Naive thymus-derived CD4-positive, alpha-beta T cell (primary cell): ENCODE measurements at regions of chr11 and their contacts with region 1.

Region 1: DNA sequence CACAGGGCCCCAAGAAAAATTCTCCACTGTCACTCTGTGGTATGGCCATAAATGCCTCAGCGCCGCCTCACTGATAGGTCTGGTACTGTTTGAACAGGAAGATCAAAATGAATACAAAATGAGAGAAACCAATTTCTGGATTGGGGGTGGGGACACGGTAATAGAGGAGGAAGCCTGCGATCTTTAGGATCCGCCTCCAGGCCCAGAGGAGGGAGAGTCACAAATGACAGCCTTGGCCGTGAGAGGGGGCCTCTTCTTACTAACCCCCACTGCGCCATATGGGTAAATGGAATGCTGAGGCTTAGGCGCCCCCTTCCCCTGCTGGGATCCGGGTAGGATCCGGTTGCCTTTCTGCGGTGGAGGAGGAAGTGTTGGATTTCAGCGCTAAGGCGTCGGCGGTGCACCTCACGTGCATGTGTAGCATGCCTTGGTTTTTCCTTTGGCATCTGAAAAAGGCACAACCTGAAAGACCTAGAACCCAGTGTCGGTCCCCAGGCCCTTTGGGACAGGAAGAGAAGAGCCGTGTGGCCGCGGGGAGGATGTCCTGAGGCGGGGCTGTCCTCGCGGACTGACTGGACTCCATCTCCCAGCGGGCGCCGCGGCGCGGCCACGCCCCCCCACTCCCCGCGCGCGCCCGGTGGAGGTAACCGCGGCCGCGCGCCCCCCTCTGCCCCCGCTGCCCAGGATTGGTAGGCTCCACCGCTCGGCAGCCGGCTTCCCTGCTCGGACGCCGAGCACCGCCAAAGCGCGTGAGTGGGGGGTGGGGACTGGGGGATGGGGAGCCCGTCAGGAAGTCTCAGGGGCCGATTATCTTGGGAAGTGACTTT is 718 bp upstream of the MADD start:
- DNase-seq: peak; percentile 82 to 89 (median 87)
- ATAC-seq: peak; percentile 82
- H3K4me3 ChIP-seq: peak overlapping the region; percentile 65
- H3K4me3 Mint-ChIP-seq: peak overlapping the region; percentile 78 to 97 (median 87)
- H3K27ac ChIP-seq: peak overlapping the region; percentile 95
- H3K27ac Mint-ChIP-seq: peak overlapping the region; percentile 93 to 99 (median 96)
- H3K4me1 ChIP-seq: peaks cover 27 to 43% of the 10 kb centered on the region in 2 donors
- H3K4me1 Mint-ChIP-seq: peaks cover 38 to 62% (median 59%) of the 10 kb centered on the region in 7 donors
- H3K27me3 ChIP-seq: no peaks in the 10 kb centered on the region
- H3K27me3 Mint-ChIP-seq: no peaks in the 10 kb centered on the region

Region 2: GRCh38 chr11:45917623-45918330 is 1351.4 kb before region 1 on chr11 and contains the start of gene PEX16:
- CTCF ChIA-PET with region 1: no interaction called
- POLR2A ChIA-PET with region 1: no interaction called
- intact Hi-C with region 1: loop called in 1 of 2 experiments (anchors 1 kb)
- DNase-seq: peak; percentile 86 to 98 (median 97)
- ATAC-seq: peak; percentile 95
- H3K4me3 ChIP-seq: peak within 1 kb of the TSS; percentile 72
- H3K4me3 Mint-ChIP-seq: peak within 1 kb of the TSS; percentile 86 to 98 (median 96)
- H3K27ac ChIP-seq: peak within 1 kb of the TSS; percentile 87
- H3K27ac Mint-ChIP-seq: peak within 1 kb of the TSS; percentile 91 to 100 (median 98)
- H3K4me1 ChIP-seq: peaks cover 24 to 36% of the 10 kb centered on the region in 2 donors
- H3K4me1 Mint-ChIP-seq: peaks cover 31 to 66% (median 49%) of the 10 kb centered on the region in 7 donors
- H3K27me3 ChIP-seq: no peaks in the 10 kb centered on the region
- H3K27me3 Mint-ChIP-seq: peaks cover 0 to 13% (median 4%) of the 10 kb centered on the region in 5 donors
- total RNA-seq, gene PEX16: 48.2 to 64.3 (median 58.1) TPM

Region 3: DNA sequence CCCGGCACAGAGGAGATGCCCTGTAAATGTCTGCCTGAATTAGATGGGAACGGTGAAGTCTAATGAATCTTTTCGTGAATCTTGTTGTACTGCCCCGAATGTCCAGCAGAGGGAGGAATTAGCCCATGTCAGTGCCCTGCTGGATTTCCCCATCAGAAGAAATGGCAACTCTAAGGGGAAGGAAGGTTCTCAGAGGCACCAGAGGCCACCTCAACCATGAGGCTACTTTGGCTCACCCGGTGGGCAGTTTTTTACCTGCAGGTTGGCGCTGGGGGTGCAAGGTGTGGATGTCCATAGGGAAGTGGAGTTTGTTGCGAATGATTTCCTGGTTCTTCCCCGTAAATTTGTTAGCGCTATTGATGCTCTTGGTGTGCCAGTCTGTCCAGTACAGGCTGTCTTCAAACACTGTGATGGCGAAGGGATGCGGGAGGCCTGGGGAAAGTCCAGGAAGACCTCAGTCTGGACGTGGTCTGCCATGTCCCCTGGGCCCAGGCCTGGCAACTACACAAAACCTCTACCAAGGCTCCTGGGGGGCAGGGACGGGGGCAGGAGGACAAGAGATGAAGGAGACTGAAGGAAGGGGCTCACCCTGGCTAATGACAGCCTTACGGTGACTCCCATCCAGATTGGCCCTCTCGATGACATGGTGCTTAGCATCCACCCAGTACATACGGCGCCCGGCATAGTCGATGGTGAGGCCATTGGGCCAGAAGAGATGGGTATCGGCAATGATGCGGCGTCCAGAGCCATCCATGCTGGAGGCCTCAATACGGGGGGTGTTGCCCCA is 379.3 kb before region 1 on chr11:
- CTCF ChIA-PET with region 1: no interaction called
- POLR2A ChIA-PET with region 1: interaction called, 3 read pairs
- intact Hi-C with region 1: loop called in 1 of 2 experiments (anchors 2 kb)
- DNase-seq: peak; percentile 40 to 80 (median 72)
- ATAC-seq: peak; percentile 95
- H3K4me3 ChIP-seq: no peak overlapping the region
- H3K4me3 Mint-ChIP-seq: no peak overlapping the region
- H3K27ac ChIP-seq: no peak overlapping the region
- H3K27ac Mint-ChIP-seq: no peak overlapping the region
- H3K4me1 ChIP-seq: no peaks in the 10 kb centered on the region
- H3K4me1 Mint-ChIP-seq: peaks cover 0 to 6% (median 0%) of the 10 kb centered on the region in 7 donors
- H3K27me3 ChIP-seq: no peaks in the 10 kb centered on the region
- H3K27me3 Mint-ChIP-seq: peaks cover 0 to 7% (median 0%) of the 10 kb centered on the region in 5 donors

Region 4: DNA sequence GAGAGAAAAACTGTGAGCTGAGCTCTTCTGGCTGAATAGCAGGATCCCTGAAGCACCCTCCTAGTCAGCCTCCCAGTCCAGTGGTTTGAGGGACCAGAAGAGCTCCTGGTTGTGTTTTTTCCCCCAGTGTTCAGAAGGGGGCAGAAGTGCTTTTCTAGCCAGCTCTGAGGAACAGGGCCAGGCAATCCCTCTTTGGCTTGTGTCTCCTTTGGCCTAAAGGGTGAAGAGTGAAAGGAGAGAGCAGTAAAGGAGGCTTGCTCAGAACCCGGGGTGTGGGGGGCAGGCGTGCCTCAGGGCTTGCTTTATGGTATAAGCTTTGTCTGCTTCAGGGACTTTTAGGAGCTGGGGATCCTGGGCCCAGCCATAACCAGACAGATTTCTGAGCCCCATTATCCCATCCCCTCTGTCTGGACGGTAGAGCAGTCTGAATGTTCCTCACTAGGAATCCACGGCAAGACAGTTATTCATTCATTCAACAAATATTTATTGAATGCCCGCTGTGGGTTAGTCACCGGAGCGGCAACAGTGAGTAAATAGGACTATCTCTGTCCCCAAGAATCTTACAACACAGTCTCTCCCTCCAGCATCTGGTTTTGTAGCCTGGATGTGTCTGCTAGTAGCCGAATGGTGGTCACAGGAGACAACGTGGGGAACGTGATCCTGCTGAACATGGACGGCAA is 35.1 kb before region 1 on chr11:
- CTCF ChIA-PET with region 1: interaction called, 6 read pairs
- POLR2A ChIA-PET with region 1: interaction called, 14 read pairs
- intact Hi-C with region 1: loop called in 1 of 2 experiments (anchors 1 kb)
- DNase-seq: peak in 6 of 9 donors; percentile 17 to 46 (median 32)
- ATAC-seq: peak; percentile 8
- H3K4me3 ChIP-seq: peak overlapping the region; percentile 38
- H3K4me3 Mint-ChIP-seq: peak overlapping the region; percentile 35 to 90 (median 80)
- H3K27ac ChIP-seq: peak overlapping the region; percentile 81
- H3K27ac Mint-ChIP-seq: peak overlapping the region; percentile 77 to 99 (median 94)
- H3K4me1 ChIP-seq: peaks cover 5 to 13% of the 10 kb centered on the region in 2 donors
- H3K4me1 Mint-ChIP-seq: peaks cover 11 to 34% (median 30%) of the 10 kb centered on the region in 7 donors
- H3K27me3 ChIP-seq: no peaks in the 10 kb centered on the region
- H3K27me3 Mint-ChIP-seq: no peaks in the 10 kb centered on the region

Region 5: DNA sequence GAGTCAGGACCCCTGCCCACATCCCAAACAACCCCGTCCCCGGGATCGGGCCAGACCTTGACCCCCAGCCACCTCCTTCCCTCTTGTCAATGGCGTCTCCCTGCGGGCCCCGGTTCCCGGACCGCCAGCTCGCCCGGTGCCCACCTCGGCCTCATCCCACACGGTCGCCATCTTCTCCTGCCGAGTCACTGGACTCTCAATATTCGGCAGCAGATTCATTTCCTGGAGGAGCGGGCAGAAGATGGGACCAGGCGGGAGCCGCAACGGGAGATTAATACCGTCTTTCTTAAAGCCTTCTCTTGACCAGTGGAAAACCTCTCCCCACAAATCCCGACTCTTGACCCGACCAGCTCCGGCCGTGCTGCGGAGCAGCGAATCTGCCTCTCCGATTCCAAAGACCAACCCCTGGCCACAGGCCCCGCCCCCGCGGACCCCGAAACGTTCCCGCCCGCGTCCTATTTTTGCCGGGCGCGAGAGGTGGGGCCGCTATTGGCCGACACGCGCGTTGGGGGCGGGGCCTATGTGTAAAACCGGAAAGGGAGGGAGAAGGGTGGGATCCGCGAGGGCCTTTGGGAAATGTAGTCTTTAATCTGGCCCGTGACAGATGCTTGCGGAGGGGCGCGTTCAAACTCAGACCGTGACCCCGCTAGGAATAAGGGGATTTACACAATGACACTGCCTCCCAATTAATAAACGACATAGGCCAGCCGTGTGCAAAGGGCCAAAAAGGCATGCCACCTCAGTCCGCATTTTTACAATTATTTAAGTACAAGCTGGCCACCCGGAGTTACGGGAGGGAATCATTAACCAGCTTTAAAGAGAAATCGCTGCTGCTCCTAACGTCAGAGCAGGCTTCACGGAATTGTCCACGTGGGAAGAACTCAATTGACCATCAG is 157.1 kb after region 1 on chr11 and contains the start of gene PSMC3:
- CTCF ChIA-PET with region 1: no interaction called
- POLR2A ChIA-PET with region 1: interaction called, 4 read pairs
- intact Hi-C with region 1: loop called (anchors 1 kb)
- DNase-seq: peak; percentile 92 to 99 (median 95)
- ATAC-seq: peak; percentile 98
- H3K4me3 ChIP-seq: peak within 1 kb of the TSS; percentile 95
- H3K4me3 Mint-ChIP-seq: peak within 1 kb of the TSS; percentile 91 to 99 (median 98)
- H3K27ac ChIP-seq: peak within 1 kb of the TSS; percentile 96
- H3K27ac Mint-ChIP-seq: peak within 1 kb of the TSS; percentile 93 to 99 (median 97)
- H3K4me1 ChIP-seq: peaks cover 9 to 10% of the 10 kb centered on the region in 2 donors
- H3K4me1 Mint-ChIP-seq: peaks cover 16 to 32% (median 27%) of the 10 kb centered on the region in 7 donors
- H3K27me3 ChIP-seq: no peaks in the 10 kb centered on the region
- H3K27me3 Mint-ChIP-seq: no peaks in the 10 kb centered on the region
- total RNA-seq, gene PSMC3: 42.2 to 149 (median 51.3) TPM

Region 6: DNA sequence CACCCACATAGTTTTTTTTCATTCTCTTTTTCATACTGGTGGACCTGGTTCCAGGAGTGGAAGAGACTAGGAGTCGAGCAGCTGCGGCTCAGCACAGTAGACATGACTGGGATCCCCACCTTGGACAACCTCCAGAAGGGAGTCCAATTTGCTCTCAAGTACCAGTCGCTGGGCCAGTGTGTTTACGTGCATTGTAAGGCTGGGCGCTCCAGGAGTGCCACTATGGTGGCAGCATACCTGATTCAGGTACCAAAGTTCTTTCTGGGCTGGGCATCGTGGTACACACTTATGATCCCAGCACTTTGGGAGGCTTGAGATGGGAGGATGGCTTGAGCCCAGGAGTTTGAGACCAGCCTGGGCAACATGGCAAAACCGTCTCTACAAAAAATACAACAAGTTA is 300.4 kb after region 1 on chr11:
- CTCF ChIA-PET with region 1: no interaction called
- POLR2A ChIA-PET with region 1: no interaction called
- intact Hi-C with region 1: no loop called
- DNase-seq: no peak
- ATAC-seq: no peak
- H3K4me3 ChIP-seq: no peak overlapping the region
- H3K4me3 Mint-ChIP-seq: no peak overlapping the region
- H3K27ac ChIP-seq: no peak overlapping the region
- H3K27ac Mint-ChIP-seq: peak overlapping the region in 1 of 9 donors; percentile 67
- H3K4me1 ChIP-seq: peaks cover 3 to 8% of the 10 kb centered on the region in 2 donors
- H3K4me1 Mint-ChIP-seq: peaks cover 0 to 37% (median 30%) of the 10 kb centered on the region in 7 donors
- H3K27me3 ChIP-seq: no peaks in the 10 kb centered on the region
- H3K27me3 Mint-ChIP-seq: no peaks in the 10 kb centered on the region

Region 7: GRCh38 chr11:47642099-47642855 is 373.1 kb after region 1 on chr11 and contains the start of gene MTCH2:
- CTCF ChIA-PET with region 1: no interaction called
- POLR2A ChIA-PET with region 1: no interaction called
- intact Hi-C with region 1: loop called (anchors 1 to 2 kb)
- DNase-seq: peak; percentile 92 to 97 (median 95)
- ATAC-seq: peak; percentile 97
- H3K4me3 ChIP-seq: peak within 1 kb of the TSS; percentile 85
- H3K4me3 Mint-ChIP-seq: peak within 1 kb of the TSS; percentile 92 to 99 (median 96)
- H3K27ac ChIP-seq: peak within 1 kb of the TSS; percentile 83
- H3K27ac Mint-ChIP-seq: peak within 1 kb of the TSS; percentile 94 to 99 (median 97)
- H3K4me1 ChIP-seq: peaks cover 8 to 11% of the 10 kb centered on the region in 2 donors
- H3K4me1 Mint-ChIP-seq: peaks cover 17 to 32% (median 25%) of the 10 kb centered on the region in 7 donors
- H3K27me3 ChIP-seq: no peaks in the 10 kb centered on the region
- H3K27me3 Mint-ChIP-seq: no peaks in the 10 kb centered on the region
- total RNA-seq, gene MTCH2: 19.8 to 88.6 (median 21.1) TPM